CD8-positive, alpha-beta memory T cell (primary cell): ENCODE measurements at regions of chr6 and their contacts with region 1.

Region 1: GRCh38 chr6:38871741-38872568 is 156.8 kb downstream of the DNAH8 start:
- DNase-seq: peak; percentile 18 to 67 (median 39)
- H3K4me3 ChIP-seq: no peak overlapping the region
- H3K4me3 Mint-ChIP-seq: no peak overlapping the region
- H3K27ac ChIP-seq: no peak overlapping the region
- H3K27ac Mint-ChIP-seq: peak overlapping the region in 1 of 8 donors; percentile 76
- H3K4me1 ChIP-seq: peaks cover 13% of the 10 kb centered on the region
- H3K4me1 Mint-ChIP-seq: peaks cover 14 to 34% (median 33%) of the 10 kb centered on the region in 3 donors
- H3K27me3 ChIP-seq: no peaks in the 10 kb centered on the region
- H3K27me3 Mint-ChIP-seq: peaks cover 0 to 6% of the 10 kb centered on the region in 2 donors

Region 2: DNA sequence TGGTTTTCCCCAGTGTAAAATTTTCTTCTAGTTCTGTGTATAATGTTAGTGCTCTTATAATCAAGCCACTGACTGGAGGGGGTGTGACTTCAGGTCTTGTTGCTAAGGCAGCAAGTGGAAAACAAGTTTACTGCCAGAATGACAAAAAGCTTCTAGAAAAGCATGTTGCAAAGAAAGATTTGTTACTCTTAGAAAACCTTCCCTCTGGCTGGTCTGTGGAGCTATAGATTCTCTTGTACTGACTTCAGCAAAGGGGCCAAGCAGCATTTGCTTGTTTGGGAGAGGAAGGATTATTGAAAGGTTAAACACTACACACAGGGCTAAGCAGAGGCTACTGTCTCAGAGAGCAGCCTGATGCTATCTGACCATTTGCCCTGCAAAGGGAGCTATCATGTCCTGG is 521.0 kb before region 1 on chr6:
- CTCF ChIA-PET with region 1: no interaction called
- POLR2A ChIA-PET with region 1: no interaction called
- DNase-seq: no peak
- H3K4me3 ChIP-seq: no peak overlapping the region
- H3K4me3 Mint-ChIP-seq: no peak overlapping the region
- H3K27ac ChIP-seq: no peak overlapping the region
- H3K27ac Mint-ChIP-seq: no peak overlapping the region
- H3K4me1 ChIP-seq: no peaks in the 10 kb centered on the region
- H3K4me1 Mint-ChIP-seq: peaks cover 11 to 16% (median 13%) of the 10 kb centered on the region in 3 donors
- H3K27me3 ChIP-seq: no peaks in the 10 kb centered on the region
- H3K27me3 Mint-ChIP-seq: no peaks in the 10 kb centered on the region

Region 3: GRCh38 chr6:38808039-38808438 is 63.9 kb before region 1 on chr6:
- CTCF ChIA-PET with region 1: no interaction called
- POLR2A ChIA-PET with region 1: no interaction called
- DNase-seq: no peak
- H3K4me3 ChIP-seq: no peak overlapping the region
- H3K4me3 Mint-ChIP-seq: no peak overlapping the region
- H3K27ac ChIP-seq: no peak overlapping the region
- H3K27ac Mint-ChIP-seq: peak overlapping the region in 1 of 8 donors; percentile 36
- H3K4me1 ChIP-seq: no peaks in the 10 kb centered on the region
- H3K4me1 Mint-ChIP-seq: peaks cover 0 to 4% (median 0%) of the 10 kb centered on the region in 3 donors
- H3K27me3 ChIP-seq: no peaks in the 10 kb centered on the region
- H3K27me3 Mint-ChIP-seq: peaks cover 12 to 49% of the 10 kb centered on the region in 2 donors

Region 4: DNA sequence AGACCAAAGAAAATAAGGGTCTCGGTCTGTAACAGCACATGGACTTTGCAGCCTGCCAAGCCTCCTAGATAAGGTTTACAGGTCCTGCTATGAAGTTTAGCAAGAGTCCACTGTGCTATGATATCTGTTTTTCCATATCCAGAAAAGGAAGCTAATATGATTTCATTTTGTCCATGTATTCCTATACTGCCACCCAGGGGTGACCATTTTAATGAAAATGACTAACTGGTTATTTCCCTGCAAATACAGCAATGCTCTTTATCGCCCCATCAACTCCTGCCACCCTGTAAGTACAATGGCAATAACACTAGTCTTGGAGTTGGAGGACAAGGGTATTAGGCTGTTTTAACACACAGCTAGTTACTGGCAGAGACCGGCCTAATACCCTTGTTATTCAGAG is 61.5 kb after region 1 on chr6:
- CTCF ChIA-PET with region 1: interaction called, 13 read pairs
- POLR2A ChIA-PET with region 1: no interaction called
- DNase-seq: no peak
- H3K4me3 ChIP-seq: no peak overlapping the region
- H3K4me3 Mint-ChIP-seq: no peak overlapping the region
- H3K27ac ChIP-seq: no peak overlapping the region
- H3K27ac Mint-ChIP-seq: no peak overlapping the region
- H3K4me1 ChIP-seq: no peaks in the 10 kb centered on the region
- H3K4me1 Mint-ChIP-seq: no peaks in the 10 kb centered on the region
- H3K27me3 ChIP-seq: peaks cover 3% of the 10 kb centered on the region
- H3K27me3 Mint-ChIP-seq: peaks cover 7 to 12% of the 10 kb centered on the region in 2 donors

Region 5: DNA sequence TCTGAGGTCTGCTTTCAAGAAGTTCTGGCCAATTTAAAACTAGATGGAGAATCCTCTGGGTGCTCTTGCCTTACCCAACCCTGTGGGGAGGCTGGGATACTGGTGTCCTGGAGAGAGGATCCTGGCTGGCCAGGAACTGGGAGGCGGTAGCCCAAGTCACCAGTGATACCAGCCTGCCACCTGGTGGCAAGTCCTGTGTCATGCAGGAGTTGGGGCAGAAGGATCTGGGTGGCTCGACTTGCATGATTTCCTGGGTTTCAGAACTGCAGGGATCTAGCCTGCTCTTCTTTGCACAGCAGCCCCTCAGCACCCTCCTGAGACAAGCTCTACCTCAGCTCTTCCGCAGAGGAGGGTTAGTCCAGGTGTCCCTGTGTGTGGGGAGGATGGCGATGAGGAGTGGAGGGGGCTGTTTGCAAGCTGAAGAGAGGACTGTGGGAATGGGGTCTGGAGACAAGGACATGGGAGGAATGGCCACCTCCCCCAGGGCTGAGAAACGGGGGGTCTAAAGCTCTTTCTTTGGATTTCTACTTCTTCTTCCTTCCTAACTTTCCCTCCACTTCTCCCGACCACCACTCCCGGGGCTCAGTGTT is 438.1 kb after region 1 on chr6:
- CTCF ChIA-PET with region 1: interaction called, 73 read pairs
- POLR2A ChIA-PET with region 1: no interaction called
- DNase-seq: peak in 4 of 5 donors; percentile 18 to 62 (median 28)
- H3K4me3 ChIP-seq: no peak overlapping the region
- H3K4me3 Mint-ChIP-seq: no peak overlapping the region
- H3K27ac ChIP-seq: no peak overlapping the region
- H3K27ac Mint-ChIP-seq: no peak overlapping the region
- H3K4me1 ChIP-seq: no peaks in the 10 kb centered on the region
- H3K4me1 Mint-ChIP-seq: peaks cover 0 to 13% (median 2%) of the 10 kb centered on the region in 3 donors
- H3K27me3 ChIP-seq: peaks cover 10% of the 10 kb centered on the region
- H3K27me3 Mint-ChIP-seq: peaks cover 23 to 34% of the 10 kb centered on the region in 2 donors